Activated CD8-positive, alpha-beta T cell treated with anti-CD3 and anti-CD28 coated beads for 36 hours (primary cell): ENCODE measurements at regions of chr2 and their contacts with region 1.

Region 1: DNA sequence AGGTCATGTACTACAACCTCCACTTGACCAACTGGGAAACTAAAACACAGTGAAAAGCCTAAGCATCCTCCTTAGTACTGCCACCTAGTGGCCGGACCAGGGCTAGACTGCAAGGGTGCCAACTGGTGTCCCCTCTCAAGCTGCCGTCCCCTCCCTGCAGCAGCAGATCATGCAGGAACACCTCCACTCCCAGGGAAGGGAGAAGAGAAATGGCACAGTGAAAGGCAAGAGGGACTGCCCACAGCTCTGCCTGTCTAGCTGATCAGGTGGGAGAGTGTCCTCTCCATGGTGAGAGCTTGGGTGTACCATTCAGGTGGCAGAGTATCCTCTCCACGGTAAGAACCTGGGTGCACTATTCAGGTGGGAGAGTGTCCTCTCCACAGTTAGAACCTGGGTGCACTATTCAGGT is 78.1 kb downstream of the AAK1 start:
- DNase-seq: peak; percentile 84
- ATAC-seq: peak; percentile 71
- H3K4me3 Mint-ChIP-seq: no peak overlapping the region
- H3K27ac Mint-ChIP-seq: peak overlapping the region; percentile 59
- H3K4me1 Mint-ChIP-seq: peaks cover 85% of the 10 kb centered on the region
- H3K27me3 Mint-ChIP-seq: no peaks in the 10 kb centered on the region
- CTCF ChIP-seq: peak; percentile 85

Region 2: DNA sequence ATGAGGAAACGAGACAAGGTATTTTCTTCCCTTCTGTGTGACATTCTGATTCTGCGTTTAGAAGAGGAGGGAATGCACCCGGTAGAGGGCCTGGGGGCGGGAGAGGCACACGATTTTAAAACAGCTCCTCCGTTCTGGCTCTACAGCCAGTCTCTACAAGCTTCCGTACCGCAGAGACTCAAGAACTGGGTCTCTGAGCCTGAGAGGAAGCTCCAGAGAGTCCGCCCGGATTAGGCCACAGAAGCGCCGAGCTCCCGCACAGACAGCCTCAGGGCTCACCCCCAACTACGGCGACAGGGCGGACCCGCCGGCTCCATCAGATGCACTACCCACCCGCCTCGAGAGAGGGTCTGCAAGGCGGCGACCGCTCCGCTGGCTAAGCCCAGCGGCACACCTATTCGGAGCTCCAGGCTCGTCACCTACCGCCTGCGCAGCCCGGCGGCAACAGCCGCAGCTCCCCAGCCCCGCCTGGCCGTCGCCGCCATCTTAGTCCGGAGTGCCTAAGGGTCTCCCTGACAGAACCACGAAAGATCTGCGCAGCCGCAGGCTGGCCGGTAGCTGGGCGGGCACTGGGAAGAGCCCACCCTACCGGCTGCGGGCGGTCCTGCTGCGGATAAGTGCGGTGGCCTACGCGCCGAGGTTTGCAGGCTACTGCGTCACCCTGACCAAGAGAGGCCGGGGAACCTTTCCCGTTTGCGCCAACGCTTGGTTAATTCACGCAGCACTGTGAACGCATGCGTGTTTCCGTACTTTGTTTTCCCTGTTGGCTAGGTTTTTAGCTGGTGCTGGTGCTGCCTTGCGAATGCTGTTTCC is 128.3 kb before region 1 on chr2 and contains the start of gene NFU1:
- CTCF ChIA-PET with region 1: interaction called, 13 read pairs
- POLR2A ChIA-PET with region 1: interaction called, 3 read pairs
- intact Hi-C with region 1: no loop called
- DNase-seq: peak; percentile 95
- ATAC-seq: peak; percentile 94
- H3K4me3 Mint-ChIP-seq: peak within 1 kb of the TSS; percentile 97
- H3K27ac Mint-ChIP-seq: peak within 1 kb of the TSS; percentile 93
- H3K4me1 Mint-ChIP-seq: peaks cover 28% of the 10 kb centered on the region
- H3K27me3 Mint-ChIP-seq: no peaks in the 10 kb centered on the region
- CTCF ChIP-seq: peak; percentile 36
- total RNA-seq, gene NFU1: 41.0 to 46.2 TPM

Region 3: DNA sequence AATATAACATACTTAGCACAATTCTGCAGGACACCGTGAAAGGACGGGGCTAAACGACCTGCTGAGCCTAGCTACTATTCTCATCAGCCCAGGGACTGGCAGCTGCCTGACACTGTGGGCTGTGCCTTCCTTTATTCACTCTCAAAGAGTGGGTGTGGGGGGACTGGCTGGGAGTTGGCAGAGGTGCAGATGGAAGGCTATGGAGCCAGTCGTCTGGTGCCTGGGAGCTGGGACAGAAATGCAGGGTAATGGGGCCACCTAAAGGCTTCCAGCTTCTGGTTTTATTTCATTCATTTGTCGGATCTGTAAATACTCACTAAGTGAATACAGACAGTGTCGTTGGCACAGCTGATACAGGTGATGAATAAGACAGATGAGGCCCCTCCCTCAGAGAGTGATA is 72.2 kb before region 1 on chr2:
- CTCF ChIA-PET with region 1: no interaction called
- POLR2A ChIA-PET with region 1: no interaction called
- intact Hi-C with region 1: no loop called
- DNase-seq: no peak
- ATAC-seq: no peak
- H3K4me3 Mint-ChIP-seq: no peak overlapping the region
- H3K27ac Mint-ChIP-seq: peak overlapping the region; percentile 54
- H3K4me1 Mint-ChIP-seq: peaks cover 42% of the 10 kb centered on the region
- H3K27me3 Mint-ChIP-seq: no peaks in the 10 kb centered on the region
- CTCF ChIP-seq: no peak

Region 4: DNA sequence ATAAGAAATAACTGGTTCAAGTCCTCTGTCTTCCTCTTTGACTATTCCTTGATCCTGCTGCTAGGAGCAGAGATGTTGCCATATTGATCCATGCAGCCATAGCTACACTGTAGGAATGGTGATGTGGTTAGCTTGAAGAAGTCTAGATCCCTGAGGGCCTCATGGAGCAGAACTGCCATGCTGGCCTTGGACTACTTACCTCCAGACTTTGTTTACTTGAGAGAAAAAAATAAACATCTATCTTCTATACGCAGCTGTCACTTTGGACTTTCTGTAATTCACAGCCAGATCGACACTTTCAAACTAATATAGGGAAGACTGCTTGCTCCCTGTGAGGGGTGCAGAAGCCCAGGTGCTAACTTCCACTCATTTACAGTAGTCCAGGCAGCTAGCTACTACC is 43.7 kb before region 1 on chr2:
- CTCF ChIA-PET with region 1: interaction called, 10 read pairs
- POLR2A ChIA-PET with region 1: no interaction called
- intact Hi-C with region 1: no loop called
- DNase-seq: no peak
- ATAC-seq: no peak
- H3K4me3 Mint-ChIP-seq: no peak overlapping the region
- H3K27ac Mint-ChIP-seq: peak overlapping the region; percentile 48
- H3K4me1 Mint-ChIP-seq: no peaks in the 10 kb centered on the region
- H3K27me3 Mint-ChIP-seq: no peaks in the 10 kb centered on the region
- CTCF ChIP-seq: no peak

Region 5: DNA sequence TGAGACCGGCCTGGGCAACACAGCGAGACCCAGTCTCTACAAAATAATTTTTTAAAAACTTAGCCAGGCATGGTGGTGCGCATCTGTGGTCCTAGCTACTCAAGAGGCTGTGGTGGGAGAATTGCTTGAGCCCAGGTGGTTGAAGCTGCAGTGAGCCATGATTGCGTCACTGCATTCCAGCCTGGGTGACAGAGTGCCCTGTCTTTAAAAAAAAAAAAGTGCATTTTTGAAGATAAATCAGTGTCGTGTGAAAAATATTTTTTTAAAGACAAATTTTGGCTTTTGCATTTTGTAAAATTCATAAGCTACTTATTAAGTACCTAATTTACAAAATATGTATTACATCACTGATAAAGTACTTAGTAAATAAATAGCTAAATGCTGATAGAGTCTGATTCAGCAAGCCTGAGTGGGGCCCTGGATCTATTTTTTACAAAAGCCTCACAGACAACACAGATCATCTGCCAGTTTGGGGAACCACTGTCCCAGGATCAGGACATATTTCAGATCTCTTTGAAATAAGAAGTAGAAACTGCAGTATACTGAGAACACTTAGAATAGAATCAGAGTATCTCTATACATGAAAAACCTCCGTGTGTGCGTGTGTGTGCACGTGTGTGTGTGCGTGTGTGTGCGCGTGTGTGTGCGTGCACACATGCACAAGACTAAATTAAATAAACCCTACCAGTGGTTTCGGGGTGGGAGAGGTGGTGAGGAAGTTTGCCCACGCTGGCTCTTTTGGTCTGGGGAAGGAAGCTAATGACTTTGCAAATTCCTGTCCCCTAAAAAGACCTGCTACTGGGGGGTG is 16.5 kb after region 1 on chr2:
- CTCF ChIA-PET with region 1: interaction called, 187 read pairs
- POLR2A ChIA-PET with region 1: interaction called, 8 read pairs
- intact Hi-C with region 1: no loop called
- DNase-seq: peak; percentile 55
- ATAC-seq: peak; percentile 24
- H3K4me3 Mint-ChIP-seq: peak overlapping the region; percentile 66
- H3K27ac Mint-ChIP-seq: peak overlapping the region; percentile 88
- H3K4me1 Mint-ChIP-seq: peaks cover 89% of the 10 kb centered on the region
- H3K27me3 Mint-ChIP-seq: no peaks in the 10 kb centered on the region
- CTCF ChIP-seq: no peak

Region 6: DNA sequence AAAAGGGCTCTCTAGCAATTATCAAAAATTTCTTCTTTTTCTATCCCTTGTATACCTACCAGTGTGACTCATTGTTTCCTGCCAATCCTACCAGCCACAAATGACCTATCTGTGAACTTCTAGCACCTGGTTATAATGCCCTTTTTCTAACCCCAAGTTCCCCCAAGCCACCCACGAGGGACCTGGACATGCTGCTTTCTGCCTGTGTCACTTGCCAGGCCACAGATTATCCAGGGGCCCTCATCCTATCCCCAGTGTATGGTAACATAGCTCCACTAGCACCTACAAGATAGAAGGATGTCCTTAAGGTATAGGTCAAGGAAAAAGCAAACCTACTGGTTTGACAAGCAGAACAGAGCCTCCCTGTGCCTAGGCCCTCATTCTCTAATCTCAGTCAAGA is 51.3 kb after region 1 on chr2:
- CTCF ChIA-PET with region 1: interaction called, 24 read pairs
- POLR2A ChIA-PET with region 1: interaction called, 6 read pairs
- intact Hi-C with region 1: no loop called
- DNase-seq: peak; percentile 86
- ATAC-seq: peak; percentile 57
- H3K4me3 Mint-ChIP-seq: peak overlapping the region; percentile 17
- H3K27ac Mint-ChIP-seq: peak overlapping the region; percentile 75
- H3K4me1 Mint-ChIP-seq: peaks cover 40% of the 10 kb centered on the region
- H3K27me3 Mint-ChIP-seq: no peaks in the 10 kb centered on the region
- CTCF ChIP-seq: no peak

Region 7: GRCh38 chr2:69660637-69661036 is 95.2 kb after region 1 on chr2:
- CTCF ChIA-PET with region 1: interaction called, 12 read pairs
- POLR2A ChIA-PET with region 1: no interaction called
- intact Hi-C with region 1: no loop called
- DNase-seq: no peak
- ATAC-seq: no peak
- H3K4me3 Mint-ChIP-seq: no peak overlapping the region
- H3K27ac Mint-ChIP-seq: no peak overlapping the region
- H3K4me1 Mint-ChIP-seq: peaks cover 12% of the 10 kb centered on the region
- H3K27me3 Mint-ChIP-seq: no peaks in the 10 kb centered on the region
- CTCF ChIP-seq: no peak

Region 8: DNA sequence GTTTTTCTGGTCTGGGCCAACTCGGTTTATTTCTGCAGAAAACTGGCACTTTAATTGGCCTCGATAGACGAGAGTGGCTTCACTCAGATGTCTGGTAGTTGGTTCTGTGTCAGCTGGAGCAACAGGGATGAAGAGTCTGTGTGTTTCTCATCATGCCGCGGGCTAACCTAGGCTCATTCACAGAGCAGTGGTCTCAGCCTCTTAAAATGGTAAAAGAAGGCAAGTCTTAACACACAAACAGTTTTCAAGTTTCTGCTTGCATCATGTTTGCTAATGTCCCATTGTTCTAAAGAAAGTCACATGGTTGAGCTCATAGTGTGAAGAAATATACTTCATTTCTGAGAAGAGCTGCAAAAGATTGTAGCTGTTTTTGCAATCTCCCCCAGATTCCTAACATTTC is 139.0 kb after region 1 on chr2:
- CTCF ChIA-PET with region 1: interaction called, 37 read pairs
- POLR2A ChIA-PET with region 1: interaction called, 3 read pairs
- intact Hi-C with region 1: loop called (anchors 5 kb)
- DNase-seq: no peak
- ATAC-seq: no peak
- H3K4me3 Mint-ChIP-seq: no peak overlapping the region
- H3K27ac Mint-ChIP-seq: no peak overlapping the region
- H3K4me1 Mint-ChIP-seq: peaks cover 9% of the 10 kb centered on the region
- H3K27me3 Mint-ChIP-seq: no peaks in the 10 kb centered on the region
- CTCF ChIP-seq: no peak

Region 9: DNA sequence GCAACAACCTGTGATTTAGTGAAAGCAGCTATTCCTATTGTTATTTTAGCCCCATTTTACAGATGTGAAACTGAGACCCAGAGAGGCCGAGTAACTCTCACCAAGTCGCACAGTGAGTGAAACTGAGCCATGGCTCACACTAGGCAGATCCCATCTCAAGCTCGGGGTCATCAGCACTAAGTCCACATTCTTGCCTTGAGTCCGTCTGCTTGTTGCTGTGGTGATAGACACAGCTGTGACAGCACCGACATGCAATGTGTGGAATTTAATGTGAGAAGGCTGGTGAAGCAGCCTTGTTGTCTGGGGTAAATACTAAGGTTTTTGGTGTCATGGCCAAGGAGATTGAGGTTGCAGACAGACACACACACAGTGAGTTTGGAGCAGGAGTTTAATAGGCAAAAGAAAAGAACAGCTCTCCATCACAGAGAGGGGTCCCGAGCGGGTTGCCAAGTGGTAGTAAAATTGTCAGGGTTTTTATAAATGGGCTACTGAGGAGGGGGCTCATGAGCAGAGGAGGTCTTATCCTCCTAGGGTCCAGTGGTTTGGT is 223.8 kb after region 1 on chr2:
- CTCF ChIA-PET with region 1: no interaction called
- POLR2A ChIA-PET with region 1: no interaction called
- intact Hi-C with region 1: no loop called
- DNase-seq: no peak
- ATAC-seq: no peak
- H3K4me3 Mint-ChIP-seq: no peak overlapping the region
- H3K27ac Mint-ChIP-seq: no peak overlapping the region
- H3K4me1 Mint-ChIP-seq: peaks cover 15% of the 10 kb centered on the region
- H3K27me3 Mint-ChIP-seq: no peaks in the 10 kb centered on the region
- CTCF ChIP-seq: no peak